ENCODE measurements at regions of chr3 and their contacts with region 1.

Region 1: DNA sequence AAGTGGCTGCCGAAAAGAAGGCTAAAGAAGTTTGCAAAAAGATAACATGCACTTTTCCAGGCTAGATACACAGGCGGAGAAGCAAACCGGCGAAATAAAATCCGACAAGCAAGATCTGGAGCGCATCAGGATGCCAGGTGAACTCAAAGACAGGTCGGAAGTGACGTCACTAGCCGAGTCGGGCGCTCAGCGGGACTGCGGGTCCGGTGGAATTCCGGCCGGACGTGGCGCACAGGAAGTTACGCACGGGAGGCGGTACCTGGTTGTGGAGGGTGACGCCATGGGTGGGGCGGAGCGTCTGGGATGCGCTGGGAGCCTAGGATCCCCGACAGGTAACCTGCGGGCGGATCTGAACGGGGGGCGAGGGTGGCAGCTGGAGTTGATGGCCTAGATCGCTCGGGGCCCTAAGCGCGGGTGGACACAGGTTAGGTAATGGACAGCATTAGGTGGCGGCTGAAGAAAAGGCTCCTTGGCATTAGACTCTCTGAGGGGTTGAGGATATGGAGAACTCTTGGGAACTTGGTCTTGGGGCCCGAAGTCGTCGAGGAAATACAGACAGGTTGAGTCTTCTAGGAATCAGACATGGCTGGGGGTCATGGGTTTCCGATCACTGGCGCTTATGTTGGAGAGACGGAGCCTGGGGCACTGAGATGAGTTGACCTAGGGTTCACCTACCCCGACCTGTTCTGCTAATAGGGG is 29.0 kb upstream of the EHHADH start:
- DNase-seq: peak; percentile 81 to 97
- H3K4me3 ChIP-seq: peak overlapping the region; percentile 59 to 72
- H3K27ac ChIP-seq: no peak overlapping the region
- H3K4me1 ChIP-seq: peaks cover 0 to 9% of the 10 kb centered on the region in 2 donors
- H3K27me3 ChIP-seq: no peaks in the 10 kb centered on the region
- CTCF ChIP-seq: no peak

Region 2: GRCh38 chr3:184811999-184812661 is 470.7 kb before region 1 on chr3 and contains the start of gene VPS8:
- intact Hi-C with region 1: loop called (anchors 5 kb)
- DNase-seq: peak; percentile 82 to 98
- H3K4me3 ChIP-seq: peak within 1 kb of the TSS; percentile 73 to 93
- H3K27ac ChIP-seq: peak within 1 kb of the TSS; percentile 56 to 79
- H3K4me1 ChIP-seq: peaks cover 0 to 6% of the 10 kb centered on the region in 2 donors
- H3K27me3 ChIP-seq: no peaks in the 10 kb centered on the region
- CTCF ChIP-seq: peak; percentile 33 to 61 (median 49)
- total RNA-seq, gene VPS8: 24.9 TPM

Region 3: DNA sequence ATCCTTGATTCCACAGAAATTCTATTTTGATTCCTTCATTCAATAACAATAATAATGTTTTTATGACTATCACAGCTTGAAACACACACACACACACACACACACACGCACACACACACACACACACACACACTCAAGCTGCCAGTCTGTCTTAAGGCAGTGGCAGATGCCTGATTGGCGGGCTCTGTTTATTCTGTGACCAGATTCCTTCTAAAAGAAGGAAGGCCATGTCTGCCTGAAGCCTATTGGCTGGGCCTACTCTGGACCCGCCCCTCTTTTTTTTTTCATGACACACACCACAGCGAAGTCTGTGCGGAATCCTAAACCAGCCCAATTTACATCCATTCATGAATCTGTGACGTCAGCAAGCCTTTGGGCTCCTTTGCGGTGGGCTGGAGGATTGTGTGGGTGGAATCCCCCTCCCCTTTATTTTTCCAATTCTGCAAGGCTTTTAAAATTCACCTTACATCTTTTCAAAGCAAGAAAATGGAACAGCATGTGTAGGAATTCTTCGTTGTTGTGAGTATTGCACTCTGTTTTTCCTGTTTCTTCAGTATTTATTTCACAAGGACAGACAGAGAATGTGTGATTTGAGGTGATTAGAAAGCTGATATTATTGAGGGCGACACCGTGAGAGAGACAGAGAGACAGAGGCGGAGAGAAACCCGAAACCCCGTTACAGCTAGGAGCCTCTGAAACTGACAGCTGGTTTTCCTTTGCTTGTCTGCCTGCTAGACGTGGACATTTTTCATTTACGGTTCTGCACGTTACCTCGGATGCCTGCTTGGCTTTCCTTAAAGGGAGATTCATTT is 80.2 kb after region 1 on chr3 and contains the start of gene MAP3K13:
- intact Hi-C with region 1: loop called (anchors 5 kb)
- DNase-seq: peak; percentile 78 to 93
- H3K4me3 ChIP-seq: peak within 1 kb of the TSS; percentile 51 to 66
- H3K27ac ChIP-seq: peak within 1 kb of the TSS; percentile 5 to 35
- H3K4me1 ChIP-seq: peaks cover 0 to 7% of the 10 kb centered on the region in 2 donors
- H3K27me3 ChIP-seq: no peaks in the 10 kb centered on the region
- CTCF ChIP-seq: no peak
- total RNA-seq, gene MAP3K13: 21.9 TPM

Region 4: DNA sequence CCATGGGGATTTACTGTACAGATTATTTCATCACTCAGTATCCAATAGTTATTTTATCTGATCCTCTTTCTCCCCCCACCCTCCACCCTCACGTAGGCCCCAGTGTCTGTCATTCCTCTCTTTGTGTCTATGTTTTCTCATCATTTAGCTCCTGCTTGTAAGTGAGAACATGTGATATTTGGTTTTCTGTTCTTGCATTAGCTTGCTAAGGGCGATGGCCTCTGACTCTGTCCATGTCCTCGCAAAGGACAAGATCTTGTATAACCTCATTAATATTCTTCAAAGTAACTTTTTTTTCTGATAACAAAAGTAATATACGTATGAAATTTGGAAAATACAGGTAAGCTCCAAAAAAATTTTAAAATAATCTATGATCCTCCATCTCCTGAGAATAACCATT is 147.5 kb after region 1 on chr3:
- intact Hi-C with region 1: no loop called
- DNase-seq: no peak
- H3K4me3 ChIP-seq: no peak overlapping the region
- H3K27ac ChIP-seq: no peak overlapping the region
- H3K4me1 ChIP-seq: no peaks in the 10 kb centered on the region
- H3K27me3 ChIP-seq: no peaks in the 10 kb centered on the region
- CTCF ChIP-seq: no peak

Region 5: GRCh38 chr3:185457302-185457701 is 174.5 kb after region 1 on chr3:
- intact Hi-C with region 1: no loop called
- DNase-seq: no peak
- H3K4me3 ChIP-seq: no peak overlapping the region
- H3K27ac ChIP-seq: no peak overlapping the region
- H3K4me1 ChIP-seq: no peaks in the 10 kb centered on the region
- H3K27me3 ChIP-seq: no peaks in the 10 kb centered on the region
- CTCF ChIP-seq: no peak

Region 6: GRCh38 chr3:185585859-185586685 is 303.2 kb after region 1 on chr3 and contains the start of gene SENP2:
- intact Hi-C with region 1: loop called (anchors 2 kb)
- DNase-seq: peak; percentile 97 to 100
- H3K4me3 ChIP-seq: peak within 1 kb of the TSS; percentile 79 to 98
- H3K27ac ChIP-seq: peak within 1 kb of the TSS; percentile 93 to 97
- H3K4me1 ChIP-seq: peaks cover 10 to 12% of the 10 kb centered on the region in 2 donors
- H3K27me3 ChIP-seq: no peaks in the 10 kb centered on the region
- CTCF ChIP-seq: no peak
- total RNA-seq, gene SENP2: 44.6 TPM

Region 7: DNA sequence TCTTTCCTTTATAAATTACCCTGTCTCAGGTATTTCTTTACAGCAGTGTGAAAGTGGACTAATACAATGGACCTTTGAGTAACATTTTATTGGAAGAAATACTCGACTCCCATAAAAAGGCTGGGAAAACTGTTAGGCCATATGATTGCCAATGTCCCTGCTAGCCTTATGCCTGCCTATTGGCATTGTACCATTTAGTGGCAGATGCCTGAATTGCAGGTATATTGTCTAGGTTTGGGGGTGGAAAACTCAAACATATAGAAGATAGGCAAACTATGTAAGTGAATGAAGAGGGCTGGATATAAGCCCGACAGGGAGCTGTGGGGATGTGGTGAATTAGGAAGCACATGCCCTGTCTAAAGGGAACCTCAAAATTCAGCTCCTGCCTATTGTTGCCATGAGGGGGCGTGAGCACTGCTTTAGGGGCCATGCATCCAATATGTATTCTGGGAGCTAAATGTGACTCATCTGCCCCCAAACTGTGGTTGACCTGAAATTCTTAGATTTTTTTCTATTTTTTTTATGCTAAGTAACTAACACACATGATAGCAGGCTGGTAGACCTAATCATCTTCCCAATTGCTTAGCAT is 720.1 kb after region 1 on chr3:
- intact Hi-C with region 1: no loop called
- DNase-seq: no peak
- H3K4me3 ChIP-seq: no peak overlapping the region
- H3K27ac ChIP-seq: no peak overlapping the region
- H3K4me1 ChIP-seq: no peaks in the 10 kb centered on the region
- H3K27me3 ChIP-seq: no peaks in the 10 kb centered on the region
- CTCF ChIP-seq: no peak